Gastrocnemius medialis (tissue), 4 donors: ENCODE measurements at regions of chr19 and their contacts with region 1.

Region 1: DNA sequence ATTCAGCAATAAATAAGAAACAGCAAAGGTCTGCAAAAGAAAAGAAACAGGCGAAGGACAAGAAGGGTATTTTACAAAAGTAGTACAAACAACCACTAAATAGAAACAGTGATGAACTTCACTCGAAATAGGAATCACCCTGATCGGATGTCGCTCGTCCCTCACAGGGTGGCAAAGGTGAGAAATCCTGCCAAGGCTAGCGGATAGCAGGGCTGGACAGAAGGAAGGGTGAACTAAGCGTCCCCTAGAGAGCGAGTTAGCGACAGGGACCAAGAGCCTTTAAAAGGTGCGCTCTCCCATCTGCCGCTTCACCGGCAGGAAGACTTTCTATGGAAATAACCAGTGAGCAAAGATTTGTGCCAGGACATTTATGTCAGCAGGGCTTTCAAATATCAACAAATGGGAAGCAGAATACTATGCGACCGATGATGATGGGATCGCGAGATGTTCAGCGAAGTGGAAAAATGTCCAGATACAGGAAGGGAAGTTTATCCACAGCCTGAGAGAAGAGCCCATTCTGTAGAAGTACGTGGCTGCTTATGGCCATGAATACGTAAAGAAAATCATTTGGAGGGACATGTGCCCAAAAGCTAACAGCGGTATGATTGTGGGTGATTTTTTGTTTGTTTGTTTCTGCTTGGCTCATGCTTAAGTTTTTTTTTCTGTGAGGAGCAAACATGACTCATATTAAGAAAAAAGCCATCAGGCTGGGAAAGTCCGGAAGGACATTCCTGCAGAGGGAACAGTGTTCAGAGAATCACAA is 18.9 kb downstream of the ELAVL1 start:
- DNase-seq: peak in 1 of 2 donors; percentile 58
- ATAC-seq: peak; percentile 78 to 84
- H3K4me3 ChIP-seq: peak overlapping the region in 3 of 4 donors; percentile 10 to 32 (median 11)
- H3K27ac ChIP-seq: peak overlapping the region; percentile 59 to 83 (median 68)
- H3K4me1 ChIP-seq: peaks cover 32 to 38% of the 10 kb centered on the region in 2 donors
- H3K27me3 ChIP-seq: no peaks in the 10 kb centered on the region
- CTCF ChIP-seq: no peak
- POLR2A ChIP-seq: no peak

Region 2: DNA sequence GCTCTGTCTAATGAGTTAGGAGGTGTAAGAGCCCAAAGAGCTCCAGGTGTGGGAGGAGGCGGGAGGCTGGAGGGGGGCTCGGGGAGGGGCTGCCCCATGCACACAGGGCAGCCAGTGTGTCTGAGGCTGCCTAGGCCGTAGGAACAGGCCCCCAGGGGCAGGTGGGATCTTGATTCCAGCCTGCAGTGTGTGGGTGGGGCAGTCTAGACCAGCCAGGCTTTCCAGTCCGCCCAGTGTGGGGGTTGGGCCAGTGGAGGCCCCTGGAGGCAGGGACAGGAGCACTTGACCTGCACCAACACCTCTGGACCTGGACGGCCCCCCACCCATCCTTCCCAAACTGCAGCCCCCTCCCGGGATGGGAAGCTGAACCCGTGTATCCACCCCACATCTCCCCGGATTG is 396.2 kb before region 1 on chr19:
- in situ Hi-C with region 1: no loop called
- intact Hi-C with region 1: no loop called
- DNase-seq: no peak
- ATAC-seq: no peak
- H3K4me3 ChIP-seq: no peak overlapping the region
- H3K27ac ChIP-seq: no peak overlapping the region
- H3K4me1 ChIP-seq: no peaks in the 10 kb centered on the region
- H3K27me3 ChIP-seq: peaks cover 18 to 24% (median 20%) of the 10 kb centered on the region in 3 donors
- CTCF ChIP-seq: no peak
- POLR2A ChIP-seq: no peak

Region 3: DNA sequence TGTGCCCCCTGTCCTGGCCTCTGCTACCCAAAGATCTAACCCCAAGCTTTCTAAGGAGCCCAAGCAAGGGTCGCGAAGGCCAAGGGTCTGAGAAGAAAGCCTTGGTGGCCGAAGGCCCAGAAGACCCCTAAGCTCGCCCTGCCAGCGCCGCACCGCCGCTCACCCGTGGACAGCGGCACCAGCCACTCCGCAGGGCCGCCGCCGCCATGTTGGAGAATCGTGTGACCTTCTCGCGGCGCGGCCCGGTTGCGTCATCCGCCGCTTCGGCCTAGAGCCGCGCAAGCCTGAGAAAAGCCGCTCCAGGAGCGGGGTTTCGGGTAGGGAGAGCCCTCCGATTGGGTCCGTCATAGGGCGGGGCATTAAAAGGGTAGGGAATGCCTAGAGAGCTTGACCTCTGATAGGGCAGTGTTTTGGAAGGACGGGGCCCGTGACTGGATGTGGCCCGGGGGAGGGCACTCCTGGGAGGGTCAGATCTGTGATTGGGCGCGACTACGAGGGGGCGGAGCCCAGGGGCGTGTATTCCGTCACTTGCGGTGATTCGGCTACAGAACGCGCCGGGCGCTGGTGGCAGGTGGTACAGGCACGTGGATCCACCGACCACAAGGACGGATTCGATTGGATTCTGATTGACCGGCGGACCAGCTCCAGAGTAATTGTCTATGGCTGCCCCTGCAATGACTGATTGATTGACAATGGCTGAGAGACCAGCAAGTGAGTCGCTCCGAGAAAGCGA is 42.9 kb before region 1 on chr19 and contains the start of gene TIMM44:
- in situ Hi-C with region 1: no loop called
- intact Hi-C with region 1: no loop called
- DNase-seq: peak; percentile 100
- ATAC-seq: peak; percentile 97 to 98
- H3K4me3 ChIP-seq: peak within 1 kb of the TSS; percentile 67 to 97 (median 82)
- H3K27ac ChIP-seq: peak within 1 kb of the TSS; percentile 94 to 100 (median 98)
- H3K4me1 ChIP-seq: peaks cover 10 to 19% of the 10 kb centered on the region in 2 donors
- H3K27me3 ChIP-seq: no peaks in the 10 kb centered on the region
- CTCF ChIP-seq: no peak
- POLR2A ChIP-seq: peak; percentile 92 to 97
- total RNA-seq, gene TIMM44: 53.9 to 168 (median 94.1) TPM

Region 4: GRCh38 chr19:7970716-7971448 is 15.6 kb before region 1 on chr19:
- in situ Hi-C with region 1: no loop called
- intact Hi-C with region 1: loop called (anchors 2 kb)
- DNase-seq: peak in 1 of 2 donors; percentile 35
- ATAC-seq: no peak
- H3K4me3 ChIP-seq: no peak overlapping the region
- H3K27ac ChIP-seq: no peak overlapping the region
- H3K4me1 ChIP-seq: peaks cover 18 to 19% of the 10 kb centered on the region in 2 donors
- H3K27me3 ChIP-seq: no peaks in the 10 kb centered on the region
- CTCF ChIP-seq: peak; percentile 52 to 77 (median 69)
- POLR2A ChIP-seq: no peak